MCF 10A (cell line): ENCODE measurements at regions of chr15 and their contacts with region 1.

Region 1: DNA sequence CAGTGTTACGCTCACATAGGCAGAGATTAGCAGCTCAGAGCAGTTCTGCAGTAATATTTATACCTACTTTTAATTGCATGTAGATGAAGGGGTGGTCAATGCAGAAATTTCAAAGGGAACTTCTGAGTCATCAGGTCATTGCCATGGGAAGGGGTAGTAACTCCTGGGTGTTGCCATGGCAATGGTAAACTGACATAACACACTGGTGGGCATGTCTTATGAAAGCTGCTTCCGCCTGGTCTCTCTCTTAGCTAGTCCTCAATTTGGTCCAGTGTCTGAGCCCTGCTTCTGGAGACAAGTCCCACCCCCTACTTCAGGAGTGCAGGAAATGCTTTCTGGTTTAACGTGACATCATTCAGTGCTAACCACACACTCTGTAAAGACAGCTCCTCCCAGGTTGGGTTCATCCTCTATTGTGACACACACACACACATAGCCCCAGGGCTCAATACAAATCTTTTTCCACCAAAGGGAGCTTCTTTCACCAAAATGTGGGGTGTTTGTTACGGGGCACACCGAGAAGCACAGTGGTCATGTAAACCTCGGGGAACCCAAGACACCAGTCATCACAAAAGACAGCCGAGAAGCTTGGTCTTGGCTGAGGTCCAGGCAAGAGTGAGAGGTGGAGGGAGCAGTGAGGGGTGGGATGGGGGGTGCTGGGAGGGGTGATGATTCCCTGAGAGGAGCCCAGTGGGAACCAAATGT is 74.5 kb downstream of the TLE3 start:
- DNase-seq: peak; percentile 88
- H3K4me3 Mint-ChIP-seq: peak overlapping the region; percentile 25
- H3K27ac Mint-ChIP-seq: peak overlapping the region; percentile 57
- H3K4me1 Mint-ChIP-seq: peaks cover 23% of the 10 kb centered on the region
- H3K27me3 Mint-ChIP-seq: peaks cover 45% of the 10 kb centered on the region
- CTCF ChIP-seq: no peak

Region 2: DNA sequence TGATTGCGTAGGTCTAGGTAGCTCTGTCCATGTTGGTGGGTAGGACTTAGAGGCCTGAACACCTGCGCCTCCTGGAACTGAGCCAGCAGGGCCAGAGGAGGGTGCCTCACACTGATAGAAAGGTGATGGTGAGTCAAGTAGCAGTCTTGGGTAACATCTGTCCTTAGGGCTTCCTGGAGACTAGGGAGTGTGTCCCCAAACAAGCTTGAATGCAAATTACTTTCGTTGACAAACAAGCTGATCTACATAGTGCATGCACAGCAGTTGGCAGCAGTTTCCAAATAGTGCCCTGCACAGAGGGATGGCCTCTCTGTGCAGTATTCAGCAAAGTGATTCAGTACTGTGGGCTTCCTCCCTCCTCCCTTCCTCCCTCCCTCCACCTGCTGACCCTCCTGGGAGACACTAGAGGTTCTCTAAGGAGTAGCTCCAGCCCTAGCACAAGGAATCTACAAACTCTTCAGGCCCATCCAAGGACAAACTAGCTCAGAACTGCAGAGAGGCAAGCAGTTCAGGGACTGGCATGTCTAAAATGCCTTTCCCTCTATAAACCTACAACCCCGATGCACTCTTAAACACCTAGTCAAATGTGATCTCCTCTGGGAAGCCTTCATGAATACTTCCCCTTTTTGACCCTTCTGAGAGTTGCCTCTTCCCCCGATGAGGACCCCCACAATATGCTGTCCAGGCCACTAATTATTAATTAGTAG is 13.5 kb after region 1 on chr15:
- CTCF ChIA-PET with region 1: interaction called, 5 read pairs
- POLR2A ChIA-PET with region 1: interaction called, 10 read pairs
- intact Hi-C with region 1: no loop called
- DNase-seq: peak; percentile 66
- H3K4me3 Mint-ChIP-seq: no peak overlapping the region
- H3K27ac Mint-ChIP-seq: no peak overlapping the region
- H3K4me1 Mint-ChIP-seq: no peaks in the 10 kb centered on the region
- H3K27me3 Mint-ChIP-seq: peaks cover 61% of the 10 kb centered on the region
- CTCF ChIP-seq: no peak

Region 3: DNA sequence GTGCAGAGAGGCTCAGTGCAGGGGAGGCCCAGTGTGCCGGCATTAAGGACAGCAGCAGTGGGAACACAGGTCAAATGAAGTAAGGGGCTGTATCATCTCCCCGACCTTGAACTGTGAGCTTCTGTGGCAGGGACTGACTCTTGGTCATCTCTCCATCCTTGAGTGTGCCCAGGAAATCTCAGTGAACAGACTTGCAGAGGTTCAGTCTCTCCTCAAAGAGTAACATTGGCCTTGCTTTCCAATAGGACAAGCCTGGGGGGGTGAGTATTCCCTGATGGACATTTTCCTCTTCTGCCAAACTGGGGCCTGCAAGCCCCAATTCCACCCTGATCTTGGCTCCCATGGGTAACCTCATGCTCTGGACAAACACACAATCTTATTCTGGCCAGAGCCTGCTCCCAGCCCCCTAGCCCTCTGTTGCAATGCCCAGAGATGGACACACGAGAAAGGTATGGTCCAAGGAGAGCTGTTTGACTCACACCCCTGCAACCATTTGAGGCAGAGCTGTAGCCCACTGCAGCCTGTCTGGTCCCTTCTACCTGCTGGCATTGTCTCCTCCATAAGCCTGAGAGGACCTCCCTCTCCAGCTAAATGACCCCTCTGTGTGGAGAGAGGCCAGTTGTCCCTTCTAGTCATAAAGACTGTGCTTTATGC is 23.6 kb after region 1 on chr15:
- CTCF ChIA-PET with region 1: no interaction called
- POLR2A ChIA-PET with region 1: no interaction called
- intact Hi-C with region 1: no loop called
- DNase-seq: no peak
- H3K4me3 Mint-ChIP-seq: no peak overlapping the region
- H3K27ac Mint-ChIP-seq: no peak overlapping the region
- H3K4me1 Mint-ChIP-seq: no peaks in the 10 kb centered on the region
- H3K27me3 Mint-ChIP-seq: peaks cover 24% of the 10 kb centered on the region
- CTCF ChIP-seq: no peak